HCT116 (cell line): ENCODE measurements at regions of chr3 and their contacts with region 1.

Region 1: DNA sequence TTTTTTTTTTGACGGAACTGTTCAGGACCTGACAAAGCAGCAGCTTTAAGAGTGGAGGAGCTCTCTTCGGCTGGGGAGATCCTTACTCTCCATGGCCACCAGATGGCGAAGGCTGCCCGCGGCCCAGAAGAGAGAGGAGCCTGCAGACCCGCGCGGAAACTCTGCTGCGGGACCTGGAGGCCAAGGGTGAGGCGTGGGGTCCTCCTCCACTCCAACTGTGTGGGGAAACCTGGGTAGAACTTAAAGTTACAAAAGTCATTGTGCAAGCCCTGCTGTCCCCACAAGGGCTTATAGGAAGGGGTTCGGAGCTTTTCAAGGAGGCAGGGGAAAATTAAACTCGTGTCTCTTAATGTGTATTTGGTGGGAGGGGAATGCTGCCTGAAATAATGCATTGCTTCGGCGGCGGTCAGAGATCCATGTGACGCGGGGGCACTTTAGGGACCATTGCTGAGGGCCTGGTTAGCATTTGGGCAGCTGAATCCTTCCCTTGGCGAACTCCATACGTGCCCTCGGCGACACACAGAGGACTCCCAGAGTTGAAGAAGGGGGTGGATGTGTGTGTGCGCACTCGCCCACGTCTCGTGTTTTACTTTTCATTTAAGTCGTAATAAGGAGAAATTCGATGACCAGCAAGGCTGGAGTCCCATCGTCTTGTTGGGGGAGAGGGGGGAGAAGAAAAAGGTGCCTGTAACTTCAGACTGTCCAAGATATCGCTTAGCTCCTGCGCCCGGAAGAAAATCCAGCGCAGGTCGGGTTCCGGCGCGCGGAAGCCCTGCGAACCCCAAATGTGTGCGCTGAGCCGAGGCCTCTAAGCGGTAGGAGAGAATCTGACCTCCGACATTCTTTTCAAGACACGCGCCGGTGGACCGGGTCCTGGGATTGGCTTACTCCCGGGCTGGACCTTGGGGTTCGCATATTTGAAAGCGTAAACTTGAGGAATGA is 9.7 kb downstream of the EOMES start:
- DNase-seq: peak; percentile 55
- ATAC-seq: peak; percentile 99
- H3K4me3 ChIP-seq: 0 out of 4 replicates have a peak overlapping the region, but pooled peaks of 1 of the 2 experiments have one; percentile 4
- H3K27ac ChIP-seq: no peak overlapping the region
- H3K4me1 ChIP-seq: peaks cover 0 to 4% of the 10 kb centered on the region in 2 experiments; a peak in 1 of 4 replicates
- H3K27me3 ChIP-seq: no peaks in the 10 kb centered on the region
- CTCF ChIP-seq: peak; percentile 76 to 84 (median 77)
- POLR2A ChIP-seq: no peak
- RAD21 ChIP-seq: peak; percentile 91

Region 2: GRCh38 chr3:28008235-28008634 is 295.8 kb after region 1 on chr3:
- CTCF ChIA-PET with region 1: no interaction called
- POLR2A ChIA-PET with region 1: no interaction called
- RAD21 ChIA-PET with region 1: no interaction called
- intact Hi-C with region 1: no loop called
- DNase-seq: no peak
- ATAC-seq: no peak
- H3K4me3 ChIP-seq: no peak overlapping the region
- H3K27ac ChIP-seq: no peak overlapping the region
- H3K4me1 ChIP-seq: no peaks in the 10 kb centered on the region
- H3K27me3 ChIP-seq: no peaks in the 10 kb centered on the region
- CTCF ChIP-seq: no peak
- POLR2A ChIP-seq: no peak
- RAD21 ChIP-seq: no peak

Region 3: GRCh38 chr3:28286595-28286994 is 574.2 kb after region 1 on chr3:
- CTCF ChIA-PET with region 1: interaction called, 6 read pairs
- POLR2A ChIA-PET with region 1: no interaction called
- RAD21 ChIA-PET with region 1: interaction called in 1 of 2 experiments, 3 read pairs
- intact Hi-C with region 1: loop called (anchors 2 kb)
- DNase-seq: peak; percentile 18
- ATAC-seq: peak; percentile 79
- H3K4me3 ChIP-seq: no peak overlapping the region
- H3K27ac ChIP-seq: no peak overlapping the region
- H3K4me1 ChIP-seq: no peaks in the 10 kb centered on the region
- H3K27me3 ChIP-seq: no peaks in the 10 kb centered on the region
- CTCF ChIP-seq: peak; percentile 42 to 61 (median 48); a peak in 5 of 6 replicates
- POLR2A ChIP-seq: no peak
- RAD21 ChIP-seq: peak; percentile 68

Region 4: GRCh38 chr3:28328188-28329151 is 616.1 kb after region 1 on chr3:
- CTCF ChIA-PET with region 1: interaction called, 47 read pairs
- POLR2A ChIA-PET with region 1: no interaction called
- RAD21 ChIA-PET with region 1: interaction called, 6 to 8 read pairs
- intact Hi-C with region 1: loop called (anchors 1 kb)
- DNase-seq: no peak
- ATAC-seq: peak; percentile 32; the same call in 1 of the 2 replicates
- H3K4me3 ChIP-seq: no peak overlapping the region
- H3K27ac ChIP-seq: no peak overlapping the region
- H3K4me1 ChIP-seq: no peaks in the 10 kb centered on the region
- H3K27me3 ChIP-seq: no peaks in the 10 kb centered on the region
- CTCF ChIP-seq: peak; percentile 25 to 75 (median 37); a peak in 3 of 6 replicates
- POLR2A ChIP-seq: no peak
- RAD21 ChIP-seq: peak; percentile 69

Region 5: GRCh38 chr3:28726840-28727239 is 1014.4 kb after region 1 on chr3:
- CTCF ChIA-PET with region 1: no interaction called
- POLR2A ChIA-PET with region 1: no interaction called
- RAD21 ChIA-PET with region 1: no interaction called
- intact Hi-C with region 1: loop called (anchors 2 kb)
- DNase-seq: peak; percentile 44
- ATAC-seq: peak; percentile 88
- H3K4me3 ChIP-seq: no peak overlapping the region
- H3K27ac ChIP-seq: no peak overlapping the region
- H3K4me1 ChIP-seq: no peaks in the 10 kb centered on the region
- H3K27me3 ChIP-seq: no peaks in the 10 kb centered on the region
- CTCF ChIP-seq: peak; percentile 39 to 76 (median 75); a peak in 5 of 6 replicates
- POLR2A ChIP-seq: no peak
- RAD21 ChIP-seq: peak; percentile 56